CD14-positive monocyte (primary cell): ENCODE measurements at regions of chr17 and their contacts with region 1.

Region 1: GRCh38 chr17:19992803-19993713 is 15.4 kb upstream of the AKAP10 start:
- DNase-seq: peak; percentile 71 to 80 (median 73)
- H3K4me3 ChIP-seq: no peak overlapping the region
- H3K4me3 Mint-ChIP-seq: peak overlapping the region in 1 of 2 donors; percentile 69
- H3K27ac ChIP-seq: no peak overlapping the region
- H3K27ac Mint-ChIP-seq: no peak overlapping the region
- H3K4me1 ChIP-seq: peaks cover 7 to 10% of the 10 kb centered on the region in 2 donors
- H3K4me1 Mint-ChIP-seq: peaks cover 8% of the 10 kb centered on the region
- H3K27me3 ChIP-seq: no peaks in the 10 kb centered on the region
- H3K27me3 Mint-ChIP-seq: peaks cover 1 to 10% (median 1%) of the 10 kb centered on the region in 3 donors
- CTCF ChIP-seq: peak; percentile 78

Region 2: GRCh38 chr17:20116683-20117309 is 123.7 kb after region 1 on chr17:
- intact Hi-C with region 1: loop called (anchors 2 kb)
- DNase-seq: peak; percentile 36 to 58 (median 58)
- H3K4me3 ChIP-seq: no peak overlapping the region
- H3K4me3 Mint-ChIP-seq: no peak overlapping the region
- H3K27ac ChIP-seq: no peak overlapping the region
- H3K27ac Mint-ChIP-seq: peak overlapping the region in 1 of 7 donors; percentile 18
- H3K4me1 ChIP-seq: peaks cover 2 to 4% of the 10 kb centered on the region in 2 donors
- H3K4me1 Mint-ChIP-seq: peaks cover 6% of the 10 kb centered on the region
- H3K27me3 ChIP-seq: no peaks in the 10 kb centered on the region
- H3K27me3 Mint-ChIP-seq: no peaks in the 10 kb centered on the region
- CTCF ChIP-seq: peak; percentile 82

Region 3: GRCh38 chr17:20149251-20149650 is 156.2 kb after region 1 on chr17:
- intact Hi-C with region 1: no loop called
- DNase-seq: no peak
- H3K4me3 ChIP-seq: no peak overlapping the region
- H3K4me3 Mint-ChIP-seq: no peak overlapping the region
- H3K27ac ChIP-seq: no peak overlapping the region
- H3K27ac Mint-ChIP-seq: no peak overlapping the region
- H3K4me1 ChIP-seq: no peaks in the 10 kb centered on the region
- H3K4me1 Mint-ChIP-seq: no peaks in the 10 kb centered on the region
- H3K27me3 ChIP-seq: no peaks in the 10 kb centered on the region
- H3K27me3 Mint-ChIP-seq: peaks cover 0 to 2% (median 0%) of the 10 kb centered on the region in 3 donors
- CTCF ChIP-seq: no peak

Region 4: DNA sequence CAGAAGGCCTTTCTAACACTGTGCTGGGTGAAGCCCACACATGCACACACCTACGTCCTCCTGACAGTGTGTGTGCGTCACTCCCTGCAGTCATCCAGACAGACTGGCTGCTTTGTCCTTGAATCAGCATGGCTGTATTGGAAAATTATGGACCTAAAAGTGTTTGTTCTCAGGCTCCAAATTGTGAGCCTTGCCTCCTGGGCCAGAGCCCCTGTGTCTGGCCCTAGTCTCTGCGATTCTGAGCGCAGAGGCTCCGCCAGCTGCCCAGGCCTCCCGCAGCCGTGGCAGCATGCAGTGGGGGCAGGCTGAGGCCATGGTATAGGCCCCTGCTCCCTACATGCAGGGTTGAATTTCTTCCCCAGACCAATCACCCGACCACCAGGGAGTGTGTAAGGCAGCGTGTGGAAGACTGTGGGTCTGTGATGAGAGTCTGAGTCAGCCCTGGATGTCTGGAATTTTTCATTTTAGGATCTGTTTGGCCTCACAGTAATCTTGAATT is 307.4 kb after region 1 on chr17:
- intact Hi-C with region 1: loop called in 1 of 2 experiments (anchors 10 kb)
- DNase-seq: no peak
- H3K4me3 ChIP-seq: no peak overlapping the region
- H3K4me3 Mint-ChIP-seq: no peak overlapping the region
- H3K27ac ChIP-seq: no peak overlapping the region
- H3K27ac Mint-ChIP-seq: peak overlapping the region in 2 of 7 donors; percentile 10 to 61
- H3K4me1 ChIP-seq: no peaks in the 10 kb centered on the region
- H3K4me1 Mint-ChIP-seq: peaks cover 5% of the 10 kb centered on the region
- H3K27me3 ChIP-seq: no peaks in the 10 kb centered on the region
- H3K27me3 Mint-ChIP-seq: peaks cover 0 to 1% (median 0%) of the 10 kb centered on the region in 3 donors
- CTCF ChIP-seq: no peak

Region 5: GRCh38 chr17:20315821-20316220 is 322.8 kb after region 1 on chr17:
- intact Hi-C with region 1: loop called in 1 of 2 experiments (anchors 10 kb)
- DNase-seq: no peak
- H3K4me3 ChIP-seq: no peak overlapping the region
- H3K4me3 Mint-ChIP-seq: no peak overlapping the region
- H3K27ac ChIP-seq: no peak overlapping the region
- H3K27ac Mint-ChIP-seq: no peak overlapping the region
- H3K4me1 ChIP-seq: no peaks in the 10 kb centered on the region
- H3K4me1 Mint-ChIP-seq: peaks cover 6% of the 10 kb centered on the region
- H3K27me3 ChIP-seq: no peaks in the 10 kb centered on the region
- H3K27me3 Mint-ChIP-seq: peaks cover 4 to 5% (median 5%) of the 10 kb centered on the region in 3 donors
- CTCF ChIP-seq: no peak